Endothelial cell of umbilical vein (primary cell): ENCODE measurements at regions of chr5 and their contacts with region 1.

Region 1: GRCh38 chr5:145834917-145835847 is at the start of gene PRELID2:
- DNase-seq: peak; percentile 87
- H3K4me3 ChIP-seq: peak within 1 kb of the TSS; percentile 60 to 79 (median 69)
- H3K27ac ChIP-seq: peak within 1 kb of the TSS; percentile 65
- H3K4me1 ChIP-seq: peaks cover 26% of the 10 kb centered on the region
- H3K27me3 ChIP-seq: no peaks in the 10 kb centered on the region
- CTCF ChIP-seq: no peak
- POLR2A ChIP-seq: peak; percentile 43
- total RNA-seq, gene PRELID2: 14.9 and 16.4 TPM in 2 replicates

Region 2: DNA sequence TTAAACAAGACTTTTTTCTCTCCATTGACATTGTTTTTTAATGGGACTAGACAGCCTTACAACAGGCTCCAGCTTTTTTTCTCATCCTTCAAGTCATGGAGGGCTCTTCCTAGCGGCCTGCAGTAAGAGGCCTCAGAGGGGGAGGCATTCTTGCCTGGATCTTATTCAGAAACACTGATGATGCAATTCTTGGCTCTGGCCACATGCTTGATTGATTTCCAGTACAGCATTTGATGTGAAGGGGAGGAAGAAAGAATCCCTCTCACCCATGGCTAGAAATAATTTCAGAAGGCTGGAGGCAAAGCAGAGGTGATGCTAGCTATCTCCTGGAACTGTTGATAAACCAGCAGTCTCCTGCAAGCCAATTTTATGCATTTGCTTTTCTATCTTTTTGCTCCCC is 324.9 kb before region 1 on chr5:
- CTCF ChIA-PET with region 1: no interaction called
- POLR2A ChIA-PET with region 1: no interaction called
- dilution Hi-C with region 1: no loop called
- intact Hi-C with region 1: no loop called
- DNase-seq: no peak
- H3K4me3 ChIP-seq: no peak overlapping the region
- H3K27ac ChIP-seq: no peak overlapping the region
- H3K4me1 ChIP-seq: no peaks in the 10 kb centered on the region
- H3K27me3 ChIP-seq: no peaks in the 10 kb centered on the region
- CTCF ChIP-seq: no peak
- POLR2A ChIP-seq: no peak

Region 3: DNA sequence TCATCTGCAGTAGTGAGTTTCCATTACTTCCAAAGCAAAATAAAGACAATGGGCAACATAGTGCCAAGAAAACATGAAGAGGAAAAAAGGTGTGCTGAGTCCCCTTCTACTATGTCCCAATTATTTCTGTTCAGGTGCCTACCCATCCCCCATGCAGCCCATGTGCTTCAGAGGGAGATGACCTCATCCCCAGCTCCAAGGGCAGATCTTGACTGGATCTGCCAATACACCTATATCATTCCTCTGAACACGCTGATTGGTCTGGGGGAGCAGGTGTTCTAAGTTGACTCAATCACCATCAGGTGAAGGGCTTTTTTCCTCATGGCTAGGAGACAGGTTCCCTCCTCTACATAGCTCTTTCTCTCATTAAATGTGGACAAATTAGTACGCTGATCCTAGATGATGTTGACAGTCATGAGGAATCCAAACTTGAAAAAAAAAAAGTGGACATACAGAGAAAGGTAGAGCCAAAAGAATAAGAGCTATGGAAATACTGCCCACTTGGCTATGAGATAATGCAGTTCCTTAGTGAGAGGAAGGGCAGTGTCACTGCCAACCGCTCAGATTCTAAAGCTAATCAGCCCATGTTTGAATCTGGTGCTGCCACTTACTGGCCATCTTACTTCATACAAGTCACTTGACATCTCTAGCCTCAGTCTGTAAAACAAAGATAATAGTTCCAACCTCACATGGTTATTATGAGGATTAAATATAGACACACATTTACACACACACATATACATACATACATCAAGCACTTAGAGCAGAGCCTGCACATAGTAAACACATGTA is 23.2 kb before region 1 on chr5:
- CTCF ChIA-PET with region 1: interaction called, 11 read pairs
- POLR2A ChIA-PET with region 1: no interaction called
- dilution Hi-C with region 1: no loop called
- intact Hi-C with region 1: no loop called
- DNase-seq: peak; percentile 69
- H3K4me3 ChIP-seq: no peak overlapping the region
- H3K27ac ChIP-seq: no peak overlapping the region
- H3K4me1 ChIP-seq: no peaks in the 10 kb centered on the region
- H3K27me3 ChIP-seq: no peaks in the 10 kb centered on the region
- CTCF ChIP-seq: peak; percentile 27 to 43
- POLR2A ChIP-seq: no peak

Region 4: GRCh38 chr5:145856285-145856818 is 21.2 kb after region 1 on chr5:
- CTCF ChIA-PET with region 1: interaction called, 14 read pairs
- POLR2A ChIA-PET with region 1: no interaction called
- dilution Hi-C with region 1: no loop called
- intact Hi-C with region 1: no loop called
- DNase-seq: peak; percentile 41
- H3K4me3 ChIP-seq: peak overlapping the region in 1 of 3 experiments; percentile 2
- H3K27ac ChIP-seq: no peak overlapping the region
- H3K4me1 ChIP-seq: peaks cover 18% of the 10 kb centered on the region
- H3K27me3 ChIP-seq: peaks cover 0 to 4% of the 10 kb centered on the region in 2 experiments
- CTCF ChIP-seq: no peak
- POLR2A ChIP-seq: no peak

Region 5: DNA sequence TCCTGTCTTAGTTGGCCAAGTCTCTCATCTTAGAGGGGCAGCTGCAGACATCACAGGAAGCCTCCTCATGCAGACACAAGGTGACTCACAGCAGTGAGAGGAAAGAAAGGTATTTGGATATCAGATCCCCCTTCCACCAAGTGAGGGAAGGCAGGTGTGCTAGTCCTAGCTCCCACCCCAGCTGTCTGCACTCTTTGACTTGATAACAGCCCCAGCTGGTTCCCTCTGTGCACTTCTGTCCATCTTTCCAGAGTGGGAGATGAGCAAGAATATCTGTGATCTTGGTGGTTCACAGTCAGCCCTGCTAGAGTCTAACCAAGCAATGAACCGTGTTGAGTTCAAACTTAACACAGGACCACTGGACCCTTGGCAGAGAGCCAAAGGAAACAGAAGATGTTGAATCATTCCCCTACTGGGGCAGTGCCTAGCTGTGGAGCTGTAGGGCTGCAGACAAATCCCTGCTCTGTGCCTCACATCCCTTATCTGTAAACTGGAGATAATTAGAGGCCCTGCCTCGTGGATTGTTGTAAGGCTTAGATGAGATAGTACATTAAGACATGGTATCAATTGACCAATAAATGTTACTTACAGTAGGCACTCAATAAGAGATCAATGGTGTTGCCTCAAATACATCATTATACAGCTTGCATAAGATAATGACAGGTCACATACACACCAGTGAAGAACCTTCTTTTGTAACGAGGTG is 140.3 kb after region 1 on chr5:
- CTCF ChIA-PET with region 1: interaction called, 4 read pairs
- POLR2A ChIA-PET with region 1: no interaction called
- dilution Hi-C with region 1: no loop called
- intact Hi-C with region 1: loop called (anchors 2 kb)
- DNase-seq: peak; percentile 72
- H3K4me3 ChIP-seq: no peak overlapping the region
- H3K27ac ChIP-seq: peak overlapping the region; percentile 56
- H3K4me1 ChIP-seq: peaks cover 20% of the 10 kb centered on the region
- H3K27me3 ChIP-seq: no peaks in the 10 kb centered on the region
- CTCF ChIP-seq: no peak
- POLR2A ChIP-seq: no peak

Region 6: DNA sequence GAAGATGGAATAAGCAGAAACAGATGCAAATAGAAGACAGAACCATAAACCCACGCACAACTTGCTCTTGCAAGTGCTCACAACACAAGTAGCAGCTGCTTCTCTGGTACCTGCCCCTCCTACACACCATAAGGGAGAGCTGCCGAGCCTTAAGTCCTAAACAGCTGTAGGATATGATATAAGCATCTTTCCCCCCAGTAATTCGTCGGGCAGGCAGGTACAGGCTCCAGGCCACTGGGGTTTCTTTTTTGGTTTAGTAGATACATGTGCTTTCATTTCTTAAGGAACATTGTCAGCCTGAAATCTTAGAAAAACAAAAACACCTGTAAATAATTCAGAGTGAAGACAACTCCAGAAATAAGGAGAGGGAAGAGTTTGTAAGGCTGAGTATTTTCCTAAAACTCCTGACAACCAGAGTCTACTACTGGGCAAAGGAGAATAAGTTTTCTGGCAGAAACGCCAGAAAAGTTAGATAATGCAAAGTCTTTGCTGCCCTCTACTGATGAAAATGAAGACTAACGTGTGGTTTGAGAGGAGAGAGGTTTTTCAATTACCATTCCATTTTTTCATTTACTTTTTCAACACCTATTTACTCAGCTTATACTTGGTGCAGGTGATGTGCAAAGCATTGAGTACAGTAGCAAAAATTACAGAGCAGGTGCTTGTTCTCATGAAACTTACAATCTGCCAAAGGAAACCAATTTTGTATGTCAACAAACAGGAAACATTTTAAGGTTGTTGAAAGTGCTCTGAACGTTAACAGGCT is 591.9 kb after region 1 on chr5:
- CTCF ChIA-PET with region 1: no interaction called
- POLR2A ChIA-PET with region 1: no interaction called
- dilution Hi-C with region 1: no loop called
- intact Hi-C with region 1: loop called (anchors 5 kb)
- DNase-seq: peak; percentile 44
- H3K4me3 ChIP-seq: no peak overlapping the region
- H3K27ac ChIP-seq: no peak overlapping the region
- H3K4me1 ChIP-seq: no peaks in the 10 kb centered on the region
- H3K27me3 ChIP-seq: peaks cover 8 to 10% of the 10 kb centered on the region in 2 experiments
- CTCF ChIP-seq: peak; percentile 37 to 45
- POLR2A ChIP-seq: no peak